Natural killer cell (primary cell): ENCODE measurements at regions of chr4 and their contacts with region 1.

Region 1: DNA sequence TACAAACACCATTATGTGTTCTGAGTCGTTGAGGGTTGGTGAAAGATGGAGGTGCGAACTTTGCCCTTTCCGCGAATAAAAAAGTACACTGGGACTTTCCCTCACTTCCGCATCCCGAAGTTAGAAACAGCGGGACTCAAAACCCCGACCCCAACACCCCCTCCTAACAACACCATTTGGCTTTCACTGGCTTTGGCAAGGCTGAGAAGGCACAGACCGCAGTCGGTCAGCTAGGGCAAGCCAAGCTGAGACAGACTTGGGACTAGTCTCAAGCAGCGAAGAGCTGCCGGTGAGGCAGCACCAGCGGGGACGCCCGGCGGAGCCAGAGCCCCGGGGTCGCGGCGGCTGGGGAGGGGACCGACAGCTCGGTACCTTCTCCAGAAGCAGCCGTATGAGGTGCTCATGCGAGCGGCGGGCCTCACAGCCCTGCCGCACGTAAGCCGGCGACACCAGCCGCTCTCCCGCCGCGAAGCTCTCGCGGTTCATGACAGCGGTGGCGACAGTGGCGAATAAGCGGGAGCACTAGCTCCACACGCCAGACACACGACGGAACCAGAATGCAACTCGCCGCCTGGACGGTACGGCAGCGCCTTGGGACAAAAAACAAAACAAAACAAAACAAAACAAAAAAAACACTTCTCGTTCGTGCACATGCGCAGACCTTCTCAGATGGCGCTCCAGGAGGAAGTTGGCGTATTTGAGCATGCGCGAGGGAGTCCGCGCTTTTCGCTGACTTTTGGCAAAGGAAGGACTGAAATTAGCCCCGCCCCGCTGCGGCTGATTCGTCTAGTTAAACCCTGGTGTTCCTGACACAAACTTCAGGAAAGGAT is at the start of gene SEPSECS:
- DNase-seq: peak; percentile 87 to 99
- ATAC-seq: peak; percentile 74 to 91 (median 85)
- H3K4me3 ChIP-seq: peak within 1 kb of the TSS; percentile 86
- H3K4me3 Mint-ChIP-seq: peak within 1 kb of the TSS; percentile 87
- H3K27ac ChIP-seq: peak within 1 kb of the TSS; percentile 97
- H3K27ac Mint-ChIP-seq: peak within 1 kb of the TSS; percentile 94 to 97
- H3K4me1 ChIP-seq: peaks cover 17% of the 10 kb centered on the region
- H3K4me1 Mint-ChIP-seq: peaks cover 44 to 51% of the 10 kb centered on the region in 2 donors
- H3K27me3 ChIP-seq: no peaks in the 10 kb centered on the region
- H3K27me3 Mint-ChIP-seq: no peaks in the 10 kb centered on the region
- CTCF ChIP-seq: no peak
- total RNA-seq, gene SEPSECS: 18.5 to 26.6 (median 20.7) TPM

Region 2: GRCh38 chr4:25190407-25190806 is 30.3 kb after region 1 on chr4:
- intact Hi-C with region 1: no loop called
- DNase-seq: no peak
- ATAC-seq: no peak
- H3K4me3 ChIP-seq: no peak overlapping the region
- H3K4me3 Mint-ChIP-seq: no peak overlapping the region
- H3K27ac ChIP-seq: no peak overlapping the region
- H3K27ac Mint-ChIP-seq: no peak overlapping the region
- H3K4me1 ChIP-seq: peaks cover 10% of the 10 kb centered on the region
- H3K4me1 Mint-ChIP-seq: peaks cover 13 to 22% of the 10 kb centered on the region in 2 donors
- H3K27me3 ChIP-seq: no peaks in the 10 kb centered on the region
- H3K27me3 Mint-ChIP-seq: no peaks in the 10 kb centered on the region
- CTCF ChIP-seq: no peak

Region 3: DNA sequence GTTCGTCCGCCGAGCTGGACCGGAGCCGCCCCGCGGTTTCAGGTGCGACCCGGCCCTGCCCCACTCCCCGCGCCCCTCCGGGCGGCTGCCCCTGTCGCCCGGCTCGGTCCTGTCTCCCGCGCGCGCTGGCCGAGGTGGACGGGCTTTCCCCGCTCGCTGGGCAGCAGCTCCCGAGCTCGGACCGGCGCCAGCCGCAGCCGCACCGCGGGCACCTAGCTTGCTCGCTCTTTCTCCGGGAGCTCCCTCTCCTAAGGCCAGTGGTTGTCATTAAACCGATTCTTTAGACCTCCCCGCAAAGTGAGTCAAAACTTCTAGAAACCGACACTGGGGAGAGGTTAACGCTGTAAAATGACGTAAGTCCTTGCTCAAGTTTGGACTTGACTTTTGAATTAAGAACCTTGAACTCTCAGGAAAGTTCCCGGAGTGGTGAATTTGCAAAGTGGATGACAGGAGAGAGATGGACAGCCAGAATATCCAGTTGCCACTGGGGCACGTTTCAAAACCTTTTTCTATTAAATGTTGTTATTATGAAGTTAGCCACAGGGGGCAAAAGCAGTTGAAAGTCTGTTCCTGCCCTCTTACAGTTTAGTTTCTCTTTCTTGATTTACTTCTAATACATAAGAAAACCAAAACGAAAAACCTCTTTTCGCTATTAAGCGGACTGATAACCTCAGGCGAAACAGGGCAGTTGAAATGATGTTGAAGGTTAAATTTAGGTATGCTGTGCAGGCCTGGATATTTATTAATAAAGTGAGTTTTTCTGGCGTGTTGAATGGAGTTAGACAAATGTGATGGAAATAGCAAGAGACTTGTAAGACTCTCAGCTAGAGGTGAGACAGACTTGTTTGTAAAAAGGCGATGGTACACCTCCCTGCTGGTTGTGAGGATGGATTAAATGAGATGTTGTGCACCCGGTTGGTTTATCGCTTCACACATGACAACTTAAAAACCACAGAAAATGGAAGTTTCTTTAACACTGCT is 74.6 kb after region 1 on chr4:
- intact Hi-C with region 1: loop called (anchors 1 kb)
- DNase-seq: peak; percentile 47 to 83
- ATAC-seq: peak; percentile 64 to 81 (median 69)
- H3K4me3 ChIP-seq: peak overlapping the region; percentile 93
- H3K4me3 Mint-ChIP-seq: peak overlapping the region; percentile 100
- H3K27ac ChIP-seq: peak overlapping the region; percentile 89
- H3K27ac Mint-ChIP-seq: peak overlapping the region; percentile 99 to 100
- H3K4me1 ChIP-seq: peaks cover 17% of the 10 kb centered on the region
- H3K4me1 Mint-ChIP-seq: peaks cover 33 to 39% of the 10 kb centered on the region in 2 donors
- H3K27me3 ChIP-seq: no peaks in the 10 kb centered on the region
- H3K27me3 Mint-ChIP-seq: no peaks in the 10 kb centered on the region
- CTCF ChIP-seq: peak; percentile 57

Region 4: GRCh38 chr4:25312496-25313200 is 152.5 kb after region 1 on chr4 and contains the start of gene ZCCHC4:
- intact Hi-C with region 1: loop called (anchors 2 kb)
- DNase-seq: peak; percentile 94 to 97
- ATAC-seq: peak; percentile 99 to 100 (median 99)
- H3K4me3 ChIP-seq: peak within 1 kb of the TSS; percentile 63
- H3K4me3 Mint-ChIP-seq: peak within 1 kb of the TSS; percentile 99
- H3K27ac ChIP-seq: peak within 1 kb of the TSS; percentile 60
- H3K27ac Mint-ChIP-seq: peak within 1 kb of the TSS; percentile 93 to 99
- H3K4me1 ChIP-seq: peaks cover 8% of the 10 kb centered on the region
- H3K4me1 Mint-ChIP-seq: peaks cover 12 to 18% of the 10 kb centered on the region in 2 donors
- H3K27me3 ChIP-seq: no peaks in the 10 kb centered on the region
- H3K27me3 Mint-ChIP-seq: peaks cover 0 to 7% of the 10 kb centered on the region in 2 donors
- CTCF ChIP-seq: peak; percentile 100
- total RNA-seq, gene ZCCHC4: 9.4 to 12.0 (median 10.9) TPM